Transverse colon (tissue), 4 donors: ENCODE measurements at regions of chr9 and their contacts with region 1.

Region 1: GRCh38 chr9:129377931-129378695 is 200.1 kb upstream of the IER5L start:
- DNase-seq: no peak
- H3K4me3 ChIP-seq: no peak overlapping the region
- H3K27ac ChIP-seq: no peak overlapping the region
- H3K4me1 ChIP-seq: peaks cover 10 to 11% (median 11%) of the 10 kb centered on the region in 4 donors
- H3K27me3 ChIP-seq: no peaks in the 10 kb centered on the region
- CTCF ChIP-seq: no peak
- EP300 ChIP-seq: no peak
- POLR2A ChIP-seq: no peak

Region 2: GRCh38 chr9:129395633-129396364 is 17.7 kb after region 1 on chr9:
- in situ Hi-C with region 1: no loop called
- intact Hi-C with region 1: loop called (anchors 1 kb)
- DNase-seq: no peak
- H3K4me3 ChIP-seq: no peak overlapping the region
- H3K27ac ChIP-seq: no peak overlapping the region
- H3K4me1 ChIP-seq: no peaks in the 10 kb centered on the region
- H3K27me3 ChIP-seq: no peaks in the 10 kb centered on the region
- CTCF ChIP-seq: no peak
- EP300 ChIP-seq: no peak
- POLR2A ChIP-seq: no peak

Region 3: GRCh38 chr9:129990269-129991010 is 612.3 kb after region 1 on chr9:
- in situ Hi-C with region 1: no loop called
- intact Hi-C with region 1: loop called (anchors 5 kb)
- DNase-seq: peak; percentile 37
- H3K4me3 ChIP-seq: no peak overlapping the region
- H3K27ac ChIP-seq: peak overlapping the region; percentile 59 to 81 (median 75)
- H3K4me1 ChIP-seq: peaks cover 19 to 31% (median 27%) of the 10 kb centered on the region in 4 donors
- H3K27me3 ChIP-seq: no peaks in the 10 kb centered on the region
- CTCF ChIP-seq: no peak
- EP300 ChIP-seq: no peak
- POLR2A ChIP-seq: no peak